ENCODE measurements at regions of chr14 and their contacts with region 1.

Region 1: GRCh38 chr14:74488786-74489397 is 4.2 kb downstream of the NPC2 start:
- DNase-seq: no peak
- H3K4me3 ChIP-seq: no peak overlapping the region
- H3K27ac ChIP-seq: no peak overlapping the region
- H3K4me1 ChIP-seq: peaks cover 0 to 8% of the 10 kb centered on the region in 2 donors
- H3K27me3 ChIP-seq: no peaks in the 10 kb centered on the region
- CTCF ChIP-seq: no peak
- POLR2A ChIP-seq: no peak

Region 2: DNA sequence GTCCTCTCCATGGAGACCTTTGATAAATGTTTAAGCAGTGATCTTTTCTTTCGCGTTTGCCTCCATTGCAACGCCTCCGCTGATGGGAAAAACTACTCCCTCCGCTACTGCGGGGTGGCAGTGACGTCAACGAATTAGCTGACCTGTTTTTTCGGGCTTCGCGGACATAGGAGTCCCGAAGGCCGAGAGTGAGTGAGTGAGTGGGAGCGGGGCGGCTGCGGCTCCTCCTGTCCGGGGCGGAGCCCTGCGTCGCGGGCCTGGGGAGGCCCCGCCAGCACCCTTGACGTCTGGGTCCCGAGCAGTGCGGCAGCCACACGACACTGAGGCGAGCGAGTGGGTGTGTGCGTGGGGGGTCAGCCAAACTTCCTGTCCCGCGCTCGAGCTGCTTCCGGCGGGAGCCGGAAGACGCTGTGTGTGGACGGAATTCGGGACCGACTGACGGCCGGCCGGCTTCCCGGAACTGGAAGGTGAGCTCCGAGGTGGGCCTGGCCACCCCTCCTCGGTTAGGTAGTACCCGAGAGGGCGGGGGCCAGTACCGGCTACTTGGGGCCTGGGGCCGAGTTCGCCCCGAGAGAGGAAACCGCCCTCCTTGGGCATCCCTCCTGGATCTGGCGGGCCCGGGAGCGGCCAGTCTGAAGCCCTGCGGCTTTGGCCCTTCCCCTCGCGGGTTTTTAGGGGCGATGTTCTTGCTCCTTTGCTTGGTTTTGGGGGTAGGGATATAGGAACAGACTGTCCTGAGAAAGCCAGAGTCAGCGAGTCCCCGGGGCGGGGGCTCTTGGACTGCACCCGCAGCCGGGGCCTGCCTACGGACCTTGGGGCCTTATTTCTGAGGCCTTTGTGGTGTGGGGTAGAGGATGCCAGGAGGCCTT is 602.2 kb before region 1 on chr14 and contains the start of gene ZNF410:
- intact Hi-C with region 1: no loop called
- DNase-seq: peak; percentile 90 to 93
- H3K4me3 ChIP-seq: peak within 1 kb of the TSS; percentile 77 to 90 (median 89)
- H3K27ac ChIP-seq: peak within 1 kb of the TSS; percentile 97 to 98
- H3K4me1 ChIP-seq: peaks cover 0 to 7% of the 10 kb centered on the region in 2 donors
- H3K27me3 ChIP-seq: no peaks in the 10 kb centered on the region
- CTCF ChIP-seq: no peak
- POLR2A ChIP-seq: peak; percentile 59
- total RNA-seq, gene ZNF410: 47.8 to 71.1 (median 59.0) TPM

Region 3: DNA sequence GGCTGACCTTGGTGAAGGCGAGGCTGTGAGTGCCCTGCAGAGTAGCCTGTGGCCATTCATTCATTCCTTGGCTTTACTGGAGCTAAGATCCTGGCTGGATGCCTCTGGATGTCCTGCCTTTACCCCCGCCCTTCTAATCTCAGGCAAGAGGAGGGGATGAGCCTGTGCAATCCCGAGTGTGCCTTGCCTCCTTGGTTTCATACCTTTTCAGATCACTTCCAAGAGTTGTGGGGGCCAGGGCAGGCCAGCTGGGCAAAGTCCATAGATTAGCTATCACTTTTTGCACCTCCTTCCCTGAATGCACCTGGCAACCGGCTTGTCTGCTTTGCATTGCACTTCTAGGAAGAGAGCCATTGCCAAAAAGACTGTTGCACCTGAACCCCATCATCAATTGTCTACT is 139.1 kb before region 1 on chr14:
- intact Hi-C with region 1: loop called (anchors 10 kb)
- DNase-seq: no peak
- H3K4me3 ChIP-seq: no peak overlapping the region
- H3K27ac ChIP-seq: no peak overlapping the region
- H3K4me1 ChIP-seq: no peaks in the 10 kb centered on the region
- H3K27me3 ChIP-seq: no peaks in the 10 kb centered on the region
- CTCF ChIP-seq: no peak
- POLR2A ChIP-seq: no peak

Measured in breast epithelium (tissue), 4 donors.